ENCODE measurements at regions of chr18 and their contacts with region 1.

Region 1: DNA sequence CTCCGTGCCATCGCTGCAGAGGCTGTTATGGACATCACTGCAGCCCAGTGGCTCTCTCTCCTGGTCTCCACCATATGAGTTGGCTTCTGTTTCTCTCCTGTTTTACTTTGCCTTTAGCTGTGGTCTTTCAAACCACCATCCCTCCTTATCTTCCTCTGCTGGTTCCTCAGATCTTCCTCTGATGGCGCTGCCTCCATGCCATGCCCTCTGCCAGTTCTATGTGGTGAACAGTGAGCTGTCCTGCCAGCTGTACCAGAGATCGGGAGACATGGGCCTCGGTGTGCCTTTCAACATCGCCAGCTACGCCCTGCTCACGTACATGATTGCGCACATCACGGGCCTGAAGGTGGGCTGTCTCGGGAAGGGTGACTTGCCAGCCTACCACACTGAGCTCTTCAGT is 13.1 kb downstream of the TYMS start:
- DNase-seq: no peak
- CTCF ChIP-seq: no peak

Region 2: GRCh38 chr18:658001-658946 is 12.2 kb before region 1 on chr18:
- CTCF ChIA-PET with region 1: interaction called, 12 read pairs
- POLR2A ChIA-PET with region 1: interaction called, 6 read pairs
- DNase-seq: peak; percentile 82
- CTCF ChIP-seq: no peak